Activated naive CD4-positive, alpha-beta T cell treated with anti-CD3 and anti-CD28 coated beads for 36 hours (primary cell): ENCODE measurements at regions of chr2 and their contacts with region 1.

Region 1: GRCh38 chr2:101831351-101831865 is 133.9 kb downstream of the MAP4K4 start:
- DNase-seq: peak; percentile 76
- H3K4me3 Mint-ChIP-seq: peak overlapping the region; percentile 7
- H3K27ac Mint-ChIP-seq: peak overlapping the region; percentile 87
- H3K4me1 Mint-ChIP-seq: peaks cover 55% of the 10 kb centered on the region
- H3K27me3 Mint-ChIP-seq: no peaks in the 10 kb centered on the region

Region 2: DNA sequence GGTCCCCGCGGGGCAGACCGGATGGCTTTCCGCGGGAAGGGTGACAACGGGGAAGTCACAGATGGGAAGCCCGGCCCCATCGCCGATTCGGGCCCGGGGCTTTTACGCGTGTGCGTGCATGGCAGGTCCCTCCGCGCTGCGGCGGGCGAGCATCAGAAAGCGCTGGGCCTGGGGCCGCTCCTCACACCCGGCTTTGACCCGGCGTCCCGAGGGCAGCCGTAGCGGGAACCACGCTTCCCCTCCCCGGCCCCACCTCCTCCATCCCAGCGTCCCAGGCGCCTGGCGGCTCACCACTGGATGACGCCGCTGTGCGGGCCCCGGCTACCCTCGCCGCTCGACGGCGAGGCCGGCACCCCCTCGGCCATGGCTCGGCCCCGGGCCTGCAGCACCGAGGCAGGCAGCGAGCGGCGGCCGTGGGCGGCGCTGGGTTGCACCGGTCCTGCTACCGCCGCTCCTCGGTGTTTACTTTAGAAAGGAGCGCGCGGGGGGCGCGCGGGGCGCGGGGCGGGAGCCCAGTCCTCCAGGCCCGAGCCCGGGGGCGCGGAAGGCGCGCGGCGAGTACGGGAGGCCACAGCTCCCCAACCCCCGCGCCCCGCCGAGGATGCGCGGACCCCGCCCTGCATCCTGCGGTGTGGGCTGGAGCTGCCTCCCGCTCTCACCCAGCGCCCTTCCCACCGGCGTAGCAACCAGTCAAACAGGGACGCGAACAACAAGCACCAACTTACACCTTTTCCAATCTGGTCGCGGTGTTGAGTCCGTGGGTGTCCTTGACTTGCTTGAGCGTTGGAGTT is 357.3 kb before region 1 on chr2:
- CTCF ChIA-PET with region 1: no interaction called
- intact Hi-C with region 1: loop called (anchors 2 kb)
- DNase-seq: peak; percentile 64
- H3K4me3 Mint-ChIP-seq: peak overlapping the region; percentile 80
- H3K27ac Mint-ChIP-seq: no peak overlapping the region
- H3K4me1 Mint-ChIP-seq: peaks cover 6% of the 10 kb centered on the region
- H3K27me3 Mint-ChIP-seq: peaks cover 3% of the 10 kb centered on the region

Region 3: GRCh38 chr2:101558740-101559519 is 272.5 kb before region 1 on chr2:
- CTCF ChIA-PET with region 1: no interaction called
- intact Hi-C with region 1: no loop called
- DNase-seq: no peak
- H3K4me3 Mint-ChIP-seq: no peak overlapping the region
- H3K27ac Mint-ChIP-seq: no peak overlapping the region
- H3K4me1 Mint-ChIP-seq: peaks cover 30% of the 10 kb centered on the region
- H3K27me3 Mint-ChIP-seq: no peaks in the 10 kb centered on the region

Region 4: GRCh38 chr2:101655702-101656422 is 175.5 kb before region 1 on chr2:
- CTCF ChIA-PET with region 1: no interaction called
- intact Hi-C with region 1: loop called (anchors 2 kb)
- DNase-seq: no peak
- H3K4me3 Mint-ChIP-seq: no peak overlapping the region
- H3K27ac Mint-ChIP-seq: no peak overlapping the region
- H3K4me1 Mint-ChIP-seq: peaks cover 25% of the 10 kb centered on the region
- H3K27me3 Mint-ChIP-seq: no peaks in the 10 kb centered on the region

Region 5: DNA sequence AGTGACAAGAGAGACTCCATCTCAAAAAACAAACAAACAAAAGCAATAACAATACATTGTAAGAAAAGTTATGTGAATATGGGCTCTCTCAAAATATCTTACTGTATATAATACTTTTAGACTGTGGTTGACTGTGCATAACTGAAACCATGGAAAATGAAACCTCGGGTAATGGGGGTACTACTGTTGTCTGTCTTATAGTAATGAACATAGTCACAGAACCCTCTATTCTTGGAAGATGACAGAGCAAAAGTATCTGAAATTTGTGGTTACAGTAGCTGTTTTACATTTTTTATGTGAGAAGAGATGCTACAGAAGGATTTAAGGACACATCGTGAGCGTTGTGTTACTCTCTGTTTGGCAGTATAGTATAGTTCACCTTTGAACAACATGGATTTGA is 73.4 kb before region 1 on chr2:
- CTCF ChIA-PET with region 1: interaction called, 7 read pairs
- intact Hi-C with region 1: loop called (anchors 1 kb)
- DNase-seq: peak; percentile 60
- H3K4me3 Mint-ChIP-seq: peak overlapping the region; percentile 48
- H3K27ac Mint-ChIP-seq: peak overlapping the region; percentile 81
- H3K4me1 Mint-ChIP-seq: peaks cover 77% of the 10 kb centered on the region
- H3K27me3 Mint-ChIP-seq: no peaks in the 10 kb centered on the region

Region 6: GRCh38 chr2:101806123-101806522 is 25.3 kb before region 1 on chr2:
- CTCF ChIA-PET with region 1: interaction called, 6 read pairs
- intact Hi-C with region 1: loop called (anchors 1 kb)
- DNase-seq: peak; percentile 69
- H3K4me3 Mint-ChIP-seq: no peak overlapping the region
- H3K27ac Mint-ChIP-seq: peak overlapping the region; percentile 59
- H3K4me1 Mint-ChIP-seq: peaks cover 78% of the 10 kb centered on the region
- H3K27me3 Mint-ChIP-seq: no peaks in the 10 kb centered on the region

Region 7: DNA sequence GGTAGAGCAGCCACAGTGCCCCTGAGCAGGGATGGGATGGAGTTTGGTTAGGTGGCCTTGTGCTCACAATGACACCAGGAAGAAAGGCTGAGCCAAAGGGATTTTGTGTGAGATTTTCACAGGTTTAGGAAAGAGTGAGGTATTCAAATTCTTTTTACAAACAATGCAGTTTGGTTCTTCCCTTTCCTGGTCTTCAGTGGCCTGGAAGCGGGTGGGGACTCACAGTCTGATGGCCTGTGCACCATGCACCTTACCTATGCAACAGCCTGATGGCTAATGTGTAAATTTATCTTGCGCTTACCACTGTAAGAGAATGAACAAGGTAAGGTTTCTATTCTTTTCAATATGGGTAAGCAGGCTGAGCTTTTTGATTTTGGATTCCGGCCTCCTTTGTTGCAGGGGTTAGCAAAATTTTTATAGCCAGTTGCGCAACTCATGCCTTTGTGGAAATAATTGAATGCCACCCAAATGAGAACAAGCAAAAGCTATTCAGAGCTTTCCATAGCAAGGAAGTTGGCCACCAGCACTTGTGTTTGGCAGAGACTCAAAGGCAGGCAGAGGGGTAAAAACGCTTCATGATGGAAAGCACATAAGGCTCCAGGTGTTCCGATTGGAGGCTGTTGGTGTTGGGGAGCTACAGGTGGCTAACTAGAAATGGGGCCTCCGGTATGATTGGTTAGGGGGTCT is 136.6 kb after region 1 on chr2:
- CTCF ChIA-PET with region 1: no interaction called
- intact Hi-C with region 1: no loop called
- DNase-seq: no peak
- H3K4me3 Mint-ChIP-seq: no peak overlapping the region
- H3K27ac Mint-ChIP-seq: no peak overlapping the region
- H3K4me1 Mint-ChIP-seq: peaks cover 5% of the 10 kb centered on the region
- H3K27me3 Mint-ChIP-seq: no peaks in the 10 kb centered on the region

Region 8: GRCh38 chr2:102080451-102081242 is 249.2 kb after region 1 on chr2:
- CTCF ChIA-PET with region 1: no interaction called
- intact Hi-C with region 1: no loop called
- DNase-seq: no peak
- H3K4me3 Mint-ChIP-seq: no peak overlapping the region
- H3K27ac Mint-ChIP-seq: peak overlapping the region; percentile 26
- H3K4me1 Mint-ChIP-seq: peaks cover 60% of the 10 kb centered on the region
- H3K27me3 Mint-ChIP-seq: no peaks in the 10 kb centered on the region